H1 (cell line): ENCODE measurements at regions of chr7 and their contacts with region 1.

Region 1: DNA sequence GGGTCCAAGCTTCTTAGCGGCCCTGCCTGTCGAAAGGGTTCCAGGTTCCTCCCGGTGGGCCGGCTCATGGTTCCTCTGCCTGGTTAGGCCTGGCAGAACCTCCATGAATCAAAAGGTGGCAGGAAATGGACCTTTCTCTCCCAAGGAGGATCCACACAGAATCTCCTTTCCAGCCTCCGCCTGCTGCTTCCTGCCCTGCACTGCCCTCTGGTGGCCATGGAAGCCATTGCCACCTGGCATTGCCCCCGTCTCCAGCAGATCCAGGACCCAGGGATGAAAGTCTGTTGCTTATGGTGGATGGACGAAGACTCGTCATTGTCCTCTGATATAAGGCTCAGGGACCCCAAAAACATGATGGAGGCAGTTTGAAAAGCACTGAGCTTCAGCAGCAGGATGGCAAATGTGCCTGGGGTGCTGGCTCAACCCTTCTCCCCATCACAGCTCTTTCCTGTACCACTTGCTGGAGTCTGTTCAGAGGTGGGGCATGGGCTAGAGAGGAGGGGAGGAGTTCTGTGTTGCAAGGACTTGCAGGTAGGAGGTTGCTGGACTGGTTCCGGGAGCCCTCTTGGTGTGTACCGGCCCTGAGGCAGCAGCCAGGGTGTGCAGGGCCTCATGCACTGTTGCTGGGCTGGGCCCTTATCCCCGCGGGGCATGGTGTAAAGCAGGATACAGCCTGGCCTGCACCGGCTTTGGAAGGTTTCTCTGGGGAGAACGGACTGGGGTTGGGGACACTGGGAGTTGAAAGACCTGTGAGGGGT is 11.3 kb upstream of the INMT start:
- DNase-seq: peak in 1 of 2 experiments; percentile 97
- H3K4me3 ChIP-seq: no peak overlapping the region
- H3K27ac ChIP-seq: no peak overlapping the region
- H3K4me1 ChIP-seq: no peaks in the 10 kb centered on the region; a peak in 1 of 7 replicates
- H3K27me3 ChIP-seq: no peaks in the 10 kb centered on the region
- CTCF ChIP-seq: peak; percentile 96 to 99 (median 99)
- EP300 ChIP-seq: no peak; a peak in 1 of 3 replicates
- POLR2A ChIP-seq: no peak
- RAD21 ChIP-seq: peak; percentile 99

Region 2: GRCh38 chr7:30276203-30276900 is 464.3 kb before region 1 on chr7:
- CTCF ChIA-PET with region 1: no interaction called
- POLR2A ChIA-PET with region 1: no interaction called
- DNase-seq: peak; percentile 15 to 63
- H3K4me3 ChIP-seq: no peak overlapping the region
- H3K27ac ChIP-seq: no peak overlapping the region
- H3K4me1 ChIP-seq: peaks cover 0 to 1% (median 0%) of the 10 kb centered on the region in 4 experiments; a peak in 1 of 7 replicates
- H3K27me3 ChIP-seq: no peaks in the 10 kb centered on the region
- CTCF ChIP-seq: peak; percentile 58 to 89 (median 87)
- EP300 ChIP-seq: no peak
- POLR2A ChIP-seq: no peak
- RAD21 ChIP-seq: peak; percentile 95 to 96

Region 3: DNA sequence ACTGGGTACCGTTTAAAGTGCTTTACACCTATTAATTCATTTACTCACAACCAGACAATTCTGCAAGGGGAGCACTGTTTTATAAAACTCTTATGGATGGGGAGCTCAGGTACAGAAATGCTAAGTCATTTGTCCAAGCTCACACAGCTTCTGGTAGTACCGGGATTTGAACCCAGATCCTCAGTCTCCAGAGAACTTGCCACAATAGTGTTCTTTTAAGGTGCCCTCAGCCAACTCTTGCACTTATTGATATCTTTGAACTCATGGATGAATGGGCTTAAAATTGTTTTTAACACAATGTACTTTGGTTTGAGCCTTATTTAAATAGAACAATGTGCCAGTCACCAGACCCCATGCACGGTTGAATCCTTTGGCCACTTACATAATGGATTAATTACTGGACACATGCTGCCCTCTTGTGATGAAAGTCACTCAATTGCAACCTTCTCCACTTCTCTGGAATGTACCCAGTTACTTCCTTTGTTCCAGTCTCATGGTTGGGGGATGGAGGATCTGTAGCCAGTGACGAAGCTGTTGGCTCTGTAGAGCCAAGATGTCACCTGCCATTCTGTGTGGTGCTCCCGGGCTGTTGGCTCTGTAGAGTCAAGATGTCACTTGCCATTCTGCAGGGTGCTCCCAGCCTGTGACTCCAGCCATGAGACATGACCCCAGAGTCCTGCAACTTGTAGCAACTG is 327.6 kb before region 1 on chr7:
- CTCF ChIA-PET with region 1: no interaction called
- POLR2A ChIA-PET with region 1: no interaction called
- DNase-seq: peak in 1 of 2 experiments; percentile 48
- H3K4me3 ChIP-seq: no peak overlapping the region
- H3K27ac ChIP-seq: no peak overlapping the region
- H3K4me1 ChIP-seq: peaks cover 0 to 5% (median 3%) of the 10 kb centered on the region in 4 experiments; a peak in 3 of 7 replicates
- H3K27me3 ChIP-seq: no peaks in the 10 kb centered on the region
- CTCF ChIP-seq: peak in 2 of 3 experiments; percentile 57 to 82; a peak in 2 of 4 replicates
- EP300 ChIP-seq: peak in 1 of 2 experiments; percentile 56; a peak in 1 of 3 replicates
- POLR2A ChIP-seq: peak in 1 of 2 experiments; percentile 57; a peak in 1 of 3 replicates
- RAD21 ChIP-seq: peak; percentile 92

Region 4: GRCh38 chr7:30659312-30659711 is 81.3 kb before region 1 on chr7:
- CTCF ChIA-PET with region 1: interaction called, 68 read pairs
- POLR2A ChIA-PET with region 1: no interaction called
- DNase-seq: no peak
- H3K4me3 ChIP-seq: no peak overlapping the region
- H3K27ac ChIP-seq: no peak overlapping the region
- H3K4me1 ChIP-seq: no peaks in the 10 kb centered on the region; a peak in 1 of 7 replicates
- H3K27me3 ChIP-seq: no peaks in the 10 kb centered on the region; a peak in 1 of 7 replicates
- CTCF ChIP-seq: no peak
- EP300 ChIP-seq: no peak
- POLR2A ChIP-seq: no peak
- RAD21 ChIP-seq: no peak

Region 5: GRCh38 chr7:30694218-30694745 is 46.3 kb before region 1 on chr7:
- CTCF ChIA-PET with region 1: interaction called, 162 read pairs
- POLR2A ChIA-PET with region 1: no interaction called
- DNase-seq: no peak
- H3K4me3 ChIP-seq: no peak overlapping the region
- H3K27ac ChIP-seq: no peak overlapping the region
- H3K4me1 ChIP-seq: peaks cover 0 to 13% (median 2%) of the 10 kb centered on the region in 4 experiments; a peak in 2 of 7 replicates
- H3K27me3 ChIP-seq: no peaks in the 10 kb centered on the region
- CTCF ChIP-seq: no peak
- EP300 ChIP-seq: no peak
- POLR2A ChIP-seq: no peak
- RAD21 ChIP-seq: no peak

Region 6: GRCh38 chr7:30717181-30717580 is 23.4 kb before region 1 on chr7:
- CTCF ChIA-PET with region 1: interaction called, 16 read pairs
- POLR2A ChIA-PET with region 1: no interaction called
- DNase-seq: no peak
- H3K4me3 ChIP-seq: no peak overlapping the region
- H3K27ac ChIP-seq: no peak overlapping the region
- H3K4me1 ChIP-seq: no peaks in the 10 kb centered on the region; a peak in 1 of 7 replicates
- H3K27me3 ChIP-seq: no peaks in the 10 kb centered on the region
- CTCF ChIP-seq: peak; percentile 31 to 57 (median 55); a peak in 3 of 4 replicates
- EP300 ChIP-seq: no peak
- POLR2A ChIP-seq: no peak
- RAD21 ChIP-seq: peak; percentile 51 to 66

Region 7: DNA sequence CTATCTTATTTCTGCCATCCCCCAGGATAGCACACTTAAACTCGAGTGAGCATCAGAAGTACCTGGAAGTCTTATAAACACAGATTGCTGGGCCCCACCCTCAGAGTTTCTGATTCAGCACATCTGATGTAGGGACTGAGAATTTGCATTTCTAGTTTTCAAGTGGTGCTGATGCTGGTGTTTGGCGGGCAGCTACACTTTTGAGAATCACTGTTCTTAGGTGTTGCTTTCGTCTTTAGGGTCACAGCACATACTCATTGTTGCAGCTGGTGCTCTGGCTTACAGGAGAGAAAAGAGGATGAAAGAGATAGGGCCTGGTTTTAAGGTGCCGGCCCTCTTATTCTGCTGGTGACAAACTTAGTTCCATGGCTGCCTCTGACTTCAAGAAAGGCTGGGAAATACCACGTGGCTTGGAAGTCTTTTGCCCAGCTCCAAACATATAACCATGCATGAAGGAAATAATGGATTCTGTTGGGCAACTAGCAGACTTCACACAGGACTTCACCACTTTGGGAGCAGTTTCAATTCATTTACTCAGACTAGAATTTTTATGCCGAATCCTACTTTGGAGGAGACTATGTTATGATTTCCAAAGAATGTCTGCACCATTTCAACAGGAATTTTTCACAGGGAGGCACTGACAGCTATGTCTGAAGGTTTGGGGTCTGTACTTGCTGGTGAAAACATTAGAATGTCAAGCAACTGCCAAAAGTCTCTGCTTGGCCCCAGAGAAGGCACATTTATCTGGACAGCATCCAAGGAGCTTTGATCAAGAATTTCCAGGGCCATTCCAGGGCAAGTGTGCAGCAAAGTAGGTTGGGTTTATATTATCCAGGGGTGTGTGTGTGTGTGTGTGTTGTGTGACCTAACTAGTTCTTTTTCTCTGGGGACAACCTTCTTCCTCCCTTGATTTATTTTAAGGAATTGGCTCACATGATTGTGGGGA is 23.7 kb after region 1 on chr7:
- CTCF ChIA-PET with region 1: interaction called, 14 read pairs
- POLR2A ChIA-PET with region 1: no interaction called
- DNase-seq: no peak
- H3K4me3 ChIP-seq: no peak overlapping the region
- H3K27ac ChIP-seq: no peak overlapping the region
- H3K4me1 ChIP-seq: no peaks in the 10 kb centered on the region
- H3K27me3 ChIP-seq: no peaks in the 10 kb centered on the region
- CTCF ChIP-seq: no peak
- EP300 ChIP-seq: no peak
- POLR2A ChIP-seq: no peak
- RAD21 ChIP-seq: no peak